Naive thymus-derived CD4-positive, alpha-beta T cell (primary cell): ENCODE measurements at regions of chr3 and their contacts with region 1.

Region 1: GRCh38 chr3:5187156-5187919 is at the start of gene EDEM1:
- DNase-seq: peak; percentile 81 to 100 (median 88)
- ATAC-seq: peak; percentile 95
- H3K4me3 ChIP-seq: peak within 1 kb of the TSS; percentile 89
- H3K4me3 Mint-ChIP-seq: peak within 1 kb of the TSS; percentile 90 to 100 (median 98)
- H3K27ac ChIP-seq: peak within 1 kb of the TSS; percentile 97
- H3K27ac Mint-ChIP-seq: peak within 1 kb of the TSS; percentile 95 to 100 (median 98)
- H3K4me1 ChIP-seq: peaks cover 13 to 21% of the 10 kb centered on the region in 2 donors
- H3K4me1 Mint-ChIP-seq: peaks cover 14 to 41% (median 32%) of the 10 kb centered on the region in 7 donors
- H3K27me3 ChIP-seq: no peaks in the 10 kb centered on the region
- H3K27me3 Mint-ChIP-seq: no peaks in the 10 kb centered on the region
- total RNA-seq, gene EDEM1: 97.3 to 138 (median 126) TPM

Region 2: GRCh38 chr3:4303187-4304123 is 883.9 kb before region 1 on chr3 and contains the start of gene SETMAR:
- CTCF ChIA-PET with region 1: no interaction called
- POLR2A ChIA-PET with region 1: interaction called, 3 read pairs
- intact Hi-C with region 1: loop called (anchors 1 to 5 kb)
- DNase-seq: peak; percentile 73 to 86 (median 82)
- ATAC-seq: peak; percentile 97
- H3K4me3 ChIP-seq: peak within 1 kb of the TSS; percentile 92
- H3K4me3 Mint-ChIP-seq: peak within 1 kb of the TSS; percentile 88 to 99 (median 97)
- H3K27ac ChIP-seq: peak within 1 kb of the TSS; percentile 91
- H3K27ac Mint-ChIP-seq: peak within 1 kb of the TSS; percentile 92 to 99 (median 98)
- H3K4me1 ChIP-seq: peaks cover 0 to 8% of the 10 kb centered on the region in 2 donors
- H3K4me1 Mint-ChIP-seq: peaks cover 8 to 45% (median 34%) of the 10 kb centered on the region in 7 donors
- H3K27me3 ChIP-seq: no peaks in the 10 kb centered on the region
- H3K27me3 Mint-ChIP-seq: no peaks in the 10 kb centered on the region
- total RNA-seq, gene SETMAR: 6.4 to 13.7 (median 12.5) TPM

Region 3: DNA sequence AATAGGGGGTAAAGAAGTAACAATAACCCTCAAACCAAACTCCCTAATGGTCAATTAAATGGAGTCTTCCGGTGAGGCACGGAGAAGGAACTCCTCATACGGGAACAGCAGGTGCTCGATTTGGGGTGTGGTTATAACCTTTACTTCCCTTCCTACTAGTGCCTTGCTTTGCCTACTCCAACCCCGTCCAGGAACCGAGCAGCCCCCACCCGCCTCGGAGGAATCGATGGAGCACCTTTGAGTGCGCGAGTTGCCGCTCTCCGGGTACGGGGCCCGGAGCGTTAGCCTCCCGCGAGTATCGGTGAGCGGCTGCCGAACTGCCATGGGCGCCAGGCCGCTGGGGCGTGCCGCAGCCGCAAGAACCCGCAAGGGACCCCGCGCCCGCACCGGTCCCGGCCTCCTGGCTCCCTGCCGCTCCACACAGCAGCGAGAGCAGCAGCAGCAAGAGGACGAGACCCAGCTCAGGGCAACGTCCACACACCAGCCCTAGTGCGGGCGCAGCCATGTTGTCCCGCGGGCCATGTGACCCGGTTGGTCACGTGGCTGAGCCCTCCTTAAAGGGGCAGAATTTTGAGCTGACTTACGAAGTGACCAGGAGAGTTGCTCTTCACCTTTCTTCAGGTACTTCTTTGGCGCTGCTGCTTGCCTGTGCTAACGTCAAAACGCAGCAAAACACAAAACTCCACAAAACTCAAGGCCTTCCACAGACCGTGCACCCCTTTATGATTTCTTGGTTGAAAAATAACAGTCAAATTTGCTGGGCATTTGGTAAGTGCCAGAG is 720.4 kb before region 1 on chr3 and contains the start of gene SUMF1:
- CTCF ChIA-PET with region 1: no interaction called
- POLR2A ChIA-PET with region 1: no interaction called
- intact Hi-C with region 1: loop called in 1 of 2 experiments (anchors 2 kb)
- DNase-seq: peak; percentile 59 to 79 (median 70)
- ATAC-seq: peak; percentile 98
- H3K4me3 ChIP-seq: peak within 1 kb of the TSS; percentile 90
- H3K4me3 Mint-ChIP-seq: peak within 1 kb of the TSS; percentile 90 to 95 (median 92)
- H3K27ac ChIP-seq: peak within 1 kb of the TSS; percentile 77
- H3K27ac Mint-ChIP-seq: peak within 1 kb of the TSS; percentile 86 to 96 (median 94)
- H3K4me1 ChIP-seq: peaks cover 5 to 7% of the 10 kb centered on the region in 2 donors
- H3K4me1 Mint-ChIP-seq: peaks cover 12 to 38% (median 21%) of the 10 kb centered on the region in 7 donors
- H3K27me3 ChIP-seq: no peaks in the 10 kb centered on the region
- H3K27me3 Mint-ChIP-seq: peaks cover 0 to 2% (median under 1%) of the 10 kb centered on the region in 5 donors
- total RNA-seq, gene SUMF1: 9.2 to 20.0 (median 16.0) TPM

Region 4: GRCh38 chr3:4722103-4722502 is 465.2 kb before region 1 on chr3:
- CTCF ChIA-PET with region 1: no interaction called
- POLR2A ChIA-PET with region 1: no interaction called
- intact Hi-C with region 1: loop called in 1 of 2 experiments (anchors 10 kb)
- DNase-seq: peak in 2 of 9 donors; percentile 27 to 33
- ATAC-seq: peak; percentile 76
- H3K4me3 ChIP-seq: no peak overlapping the region
- H3K4me3 Mint-ChIP-seq: peak overlapping the region in 1 of 10 donors; percentile 33
- H3K27ac ChIP-seq: no peak overlapping the region
- H3K27ac Mint-ChIP-seq: peak overlapping the region in 2 of 9 donors; percentile 34 to 82
- H3K4me1 ChIP-seq: no peaks in the 10 kb centered on the region
- H3K4me1 Mint-ChIP-seq: peaks cover 0 to 67% (median 9%) of the 10 kb centered on the region in 7 donors
- H3K27me3 ChIP-seq: no peaks in the 10 kb centered on the region
- H3K27me3 Mint-ChIP-seq: no peaks in the 10 kb centered on the region

Region 5: GRCh38 chr3:5006755-5007202 is 180.6 kb before region 1 on chr3:
- CTCF ChIA-PET with region 1: no interaction called
- POLR2A ChIA-PET with region 1: no interaction called
- intact Hi-C with region 1: loop called in 1 of 2 experiments (anchors 5 kb)
- DNase-seq: peak in 2 of 9 donors; percentile 22 to 82
- ATAC-seq: peak; percentile 83
- H3K4me3 ChIP-seq: no peak overlapping the region
- H3K4me3 Mint-ChIP-seq: peak overlapping the region in 2 of 10 donors; percentile 42 to 55
- H3K27ac ChIP-seq: no peak overlapping the region
- H3K27ac Mint-ChIP-seq: peak overlapping the region in 5 of 9 donors; percentile 28 to 82 (median 54)
- H3K4me1 ChIP-seq: peaks cover 0 to 39% of the 10 kb centered on the region in 2 donors
- H3K4me1 Mint-ChIP-seq: peaks cover 0 to 67% (median 7%) of the 10 kb centered on the region in 7 donors
- H3K27me3 ChIP-seq: no peaks in the 10 kb centered on the region
- H3K27me3 Mint-ChIP-seq: peaks cover 0 to 8% (median 0%) of the 10 kb centered on the region in 5 donors

Region 6: DNA sequence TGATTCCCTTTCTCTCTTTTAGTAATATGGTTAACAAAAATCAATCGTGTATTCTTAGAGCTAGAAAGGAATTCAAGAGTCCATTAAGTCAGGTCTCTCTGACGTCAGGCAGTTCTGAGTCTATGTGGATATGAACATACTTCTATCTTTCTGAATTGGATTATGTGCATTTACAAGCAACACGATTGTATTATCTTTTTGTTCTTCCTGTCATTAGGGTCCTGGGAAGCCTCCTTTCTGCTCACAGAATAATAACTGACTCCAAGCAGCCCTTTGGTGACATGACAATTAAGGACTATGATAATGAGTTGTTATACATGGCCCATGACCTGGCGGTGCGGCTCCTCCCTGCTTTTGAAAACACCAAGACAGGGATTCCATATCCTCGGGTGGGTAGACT is 14.2 kb after region 1 on chr3:
- CTCF ChIA-PET with region 1: interaction called, 19 read pairs
- POLR2A ChIA-PET with region 1: interaction called, 117 read pairs
- intact Hi-C with region 1: loop called (anchors 1 kb)
- DNase-seq: no peak
- ATAC-seq: no peak
- H3K4me3 ChIP-seq: no peak overlapping the region
- H3K4me3 Mint-ChIP-seq: no peak overlapping the region
- H3K27ac ChIP-seq: no peak overlapping the region
- H3K27ac Mint-ChIP-seq: peak overlapping the region; percentile 20 to 96 (median 60)
- H3K4me1 ChIP-seq: peaks cover 28 to 40% of the 10 kb centered on the region in 2 donors
- H3K4me1 Mint-ChIP-seq: peaks cover 29 to 58% (median 53%) of the 10 kb centered on the region in 7 donors
- H3K27me3 ChIP-seq: no peaks in the 10 kb centered on the region
- H3K27me3 Mint-ChIP-seq: no peaks in the 10 kb centered on the region